ENCODE measurements at regions of chr4 and their contacts with region 1.

Region 1: GRCh38 chr4:87465739-87466366 is 43.5 kb downstream of the NUDT9 start:
- DNase-seq: no peak
- H3K4me3 ChIP-seq: no peak overlapping the region
- H3K27ac ChIP-seq: no peak overlapping the region
- H3K4me1 ChIP-seq: peaks cover 0 to 4% of the 10 kb centered on the region in 2 donors
- H3K27me3 ChIP-seq: no peaks in the 10 kb centered on the region
- CTCF ChIP-seq: peak; percentile 53 to 88 (median 70)
- POLR2A ChIP-seq: no peak

Region 2: DNA sequence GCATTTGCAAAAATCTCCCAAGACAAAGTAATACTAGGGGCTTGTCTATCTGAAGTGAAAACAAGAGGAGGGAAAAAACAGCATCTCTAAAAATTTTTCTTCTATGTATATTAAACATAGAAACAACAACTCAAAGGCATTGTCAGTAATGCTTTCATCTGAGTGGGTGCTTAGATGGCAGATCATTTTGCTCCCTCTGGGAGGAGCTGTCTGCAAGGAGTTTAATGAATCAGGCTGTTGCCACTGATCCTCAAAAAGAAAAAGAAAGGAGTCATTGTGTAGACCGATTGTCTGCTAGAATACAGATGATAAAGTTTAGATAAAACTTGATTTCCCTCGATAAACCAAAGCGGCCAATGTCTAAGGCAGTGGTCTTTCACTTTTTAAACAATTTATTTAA is 195.7 kb before region 1 on chr4:
- intact Hi-C with region 1: loop called in 1 of 2 experiments (anchors 10 kb)
- DNase-seq: peak; percentile 13 to 59 (median 22)
- H3K4me3 ChIP-seq: no peak overlapping the region
- H3K27ac ChIP-seq: no peak overlapping the region
- H3K4me1 ChIP-seq: no peaks in the 10 kb centered on the region
- H3K27me3 ChIP-seq: no peaks in the 10 kb centered on the region
- CTCF ChIP-seq: peak; percentile 25 to 67 (median 55)
- POLR2A ChIP-seq: no peak

Region 3: GRCh38 chr4:87375719-87376291 is 90.0 kb before region 1 on chr4:
- intact Hi-C with region 1: loop called (anchors 10 kb)
- DNase-seq: peak in 6 of 7 donors; percentile 48 to 68 (median 54)
- H3K4me3 ChIP-seq: no peak overlapping the region
- H3K27ac ChIP-seq: peak overlapping the region in 4 of 5 donors; percentile 18 to 72 (median 56)
- H3K4me1 ChIP-seq: peaks cover 4 to 25% of the 10 kb centered on the region in 2 donors
- H3K27me3 ChIP-seq: no peaks in the 10 kb centered on the region
- CTCF ChIP-seq: peak; percentile 57 to 93 (median 79)
- POLR2A ChIP-seq: no peak